MCF 10A (cell line): ENCODE measurements at regions of chr10 and their contacts with region 1.

Region 1: GRCh38 chr10:80619036-80619435 is 81.3 kb downstream of the SH2D4B start:
- DNase-seq: peak; percentile 70
- H3K4me3 Mint-ChIP-seq: no peak overlapping the region
- H3K27ac Mint-ChIP-seq: peak overlapping the region; percentile 75
- H3K4me1 Mint-ChIP-seq: peaks cover 23% of the 10 kb centered on the region
- H3K27me3 Mint-ChIP-seq: no peaks in the 10 kb centered on the region
- CTCF ChIP-seq: no peak

Region 2: DNA sequence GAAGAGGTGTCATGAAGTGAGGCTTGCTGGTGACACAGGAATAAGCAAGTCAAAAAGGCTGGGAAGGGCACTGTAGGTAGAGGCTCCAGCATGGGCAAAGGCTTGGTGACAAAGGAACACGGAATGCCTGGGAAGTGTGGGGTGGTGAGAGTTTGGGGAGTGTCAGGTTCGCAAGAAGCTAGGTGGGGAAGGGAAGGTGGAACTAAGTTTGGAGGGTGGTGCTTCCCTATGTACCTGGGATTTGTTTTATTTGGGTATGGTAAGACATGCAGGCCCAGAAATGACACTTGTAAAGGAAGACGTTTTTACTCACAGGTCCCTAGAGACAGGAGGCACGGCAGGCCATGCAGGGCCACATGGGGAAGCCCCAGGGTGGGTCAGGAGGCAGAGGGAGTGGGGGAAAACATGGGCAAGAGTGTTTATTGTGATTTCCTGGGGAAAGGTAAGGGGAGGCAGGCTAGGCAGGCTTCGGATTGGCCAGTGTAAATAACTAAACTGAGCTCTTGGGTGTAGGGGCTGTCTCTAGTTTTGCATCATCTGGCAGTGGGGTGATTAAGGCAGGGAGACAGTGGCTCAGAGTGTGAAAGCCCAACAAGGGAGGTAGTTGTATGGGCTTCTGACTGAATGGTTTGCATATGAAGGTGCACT is 29.2 kb before region 1 on chr10:
- CTCF ChIA-PET with region 1: interaction called, 4 read pairs
- POLR2A ChIA-PET with region 1: no interaction called
- intact Hi-C with region 1: loop called (anchors 1 kb)
- DNase-seq: no peak
- H3K4me3 Mint-ChIP-seq: no peak overlapping the region
- H3K27ac Mint-ChIP-seq: no peak overlapping the region
- H3K4me1 Mint-ChIP-seq: peaks cover 15% of the 10 kb centered on the region
- H3K27me3 Mint-ChIP-seq: no peaks in the 10 kb centered on the region
- CTCF ChIP-seq: no peak

Region 3: GRCh38 chr10:80599424-80599847 is 19.6 kb before region 1 on chr10:
- CTCF ChIA-PET with region 1: interaction called, 11 read pairs
- POLR2A ChIA-PET with region 1: interaction called, 3 read pairs
- intact Hi-C with region 1: no loop called
- DNase-seq: peak; percentile 64
- H3K4me3 Mint-ChIP-seq: no peak overlapping the region
- H3K27ac Mint-ChIP-seq: no peak overlapping the region
- H3K4me1 Mint-ChIP-seq: no peaks in the 10 kb centered on the region
- H3K27me3 Mint-ChIP-seq: no peaks in the 10 kb centered on the region
- CTCF ChIP-seq: peak; percentile 67